Lower leg skin (tissue), 4 donors: ENCODE measurements at regions of chr12 and their contacts with region 1.

Region 1: GRCh38 chr12:27025116-27025515 is 2.8 kb downstream of the MED21 start:
- DNase-seq: no peak
- H3K4me3 ChIP-seq: no peak overlapping the region
- CTCF ChIP-seq: no peak
- POLR2A ChIP-seq: no peak

Region 2: GRCh38 chr12:28383368-28383767 is 1358.3 kb after region 1 on chr12:
- intact Hi-C with region 1: loop called (anchors 5 kb)
- DNase-seq: no peak
- H3K4me3 ChIP-seq: no peak overlapping the region
- CTCF ChIP-seq: no peak
- POLR2A ChIP-seq: no peak